Activated CD8-positive, alpha-beta T cell treated with anti-CD3 and anti-CD28 coated beads for 36 hours (primary cell): ENCODE measurements at regions of chr2 and their contacts with region 1.

Region 1: DNA sequence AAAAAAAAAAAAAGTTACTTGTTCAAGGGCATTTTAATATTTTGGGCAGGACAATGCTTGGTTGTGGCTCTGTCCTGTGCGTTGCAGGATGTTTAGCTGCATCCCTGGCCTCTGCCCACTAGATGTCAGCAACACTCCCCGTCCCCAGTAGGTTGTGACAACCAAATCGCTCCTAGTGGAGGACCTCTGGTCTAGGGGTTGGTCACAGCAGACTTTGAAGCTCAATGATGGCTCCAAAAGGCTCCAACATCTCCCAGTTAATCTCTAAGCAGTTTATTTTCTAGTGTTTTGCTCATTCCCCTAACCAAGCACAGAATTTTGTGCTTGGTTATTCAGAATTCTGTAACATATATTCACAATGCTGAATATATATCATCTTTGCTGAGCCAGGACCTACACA is 67.0 kb downstream of the CHRNA1 start:
- DNase-seq: peak; percentile 80
- ATAC-seq: peak; percentile 99
- H3K4me3 Mint-ChIP-seq: no peak overlapping the region
- H3K27ac Mint-ChIP-seq: no peak overlapping the region
- H3K4me1 Mint-ChIP-seq: no peaks in the 10 kb centered on the region
- H3K27me3 Mint-ChIP-seq: no peaks in the 10 kb centered on the region
- CTCF ChIP-seq: peak; percentile 90

Region 2: DNA sequence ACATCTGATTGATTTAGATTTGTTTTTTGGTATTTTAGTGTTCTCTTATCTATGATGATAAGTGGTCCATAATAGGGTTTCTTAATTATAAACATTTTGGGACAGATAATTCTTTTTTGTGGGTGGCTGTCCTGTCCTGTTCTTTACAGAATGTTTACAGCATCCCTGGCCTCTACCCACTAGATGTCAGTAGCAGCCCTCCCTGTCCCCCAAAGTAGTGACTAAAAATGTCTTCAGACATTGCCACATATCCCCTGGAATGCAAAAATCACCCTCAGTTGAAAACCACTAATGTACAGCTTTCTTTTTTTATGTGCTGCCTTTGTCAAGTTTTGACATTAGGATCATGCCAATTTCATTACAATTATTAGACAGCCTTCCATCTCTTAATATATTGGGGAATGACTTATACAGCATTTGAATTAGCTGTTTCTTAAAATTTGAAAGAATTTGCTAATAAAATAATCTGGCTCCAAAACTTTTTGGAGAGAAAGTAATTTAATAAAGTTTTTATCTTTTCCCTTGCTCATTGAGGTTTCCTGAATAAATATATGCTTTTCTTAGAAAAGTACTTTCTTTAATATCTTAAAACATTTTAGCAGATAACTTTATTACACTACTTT is 119.2 kb before region 1 on chr2:
- CTCF ChIA-PET with region 1: interaction called, 54 read pairs
- POLR2A ChIA-PET with region 1: interaction called, 4 read pairs
- intact Hi-C with region 1: no loop called
- DNase-seq: peak; percentile 71
- ATAC-seq: peak; percentile 71
- H3K4me3 Mint-ChIP-seq: no peak overlapping the region
- H3K27ac Mint-ChIP-seq: peak overlapping the region; percentile 49
- H3K4me1 Mint-ChIP-seq: peaks cover 75% of the 10 kb centered on the region
- H3K27me3 Mint-ChIP-seq: no peaks in the 10 kb centered on the region
- CTCF ChIP-seq: peak; percentile 63

Region 3: GRCh38 chr2:174708713-174709112 is 11.5 kb after region 1 on chr2:
- CTCF ChIA-PET with region 1: interaction called, 96 read pairs
- POLR2A ChIA-PET with region 1: no interaction called
- intact Hi-C with region 1: no loop called
- DNase-seq: no peak
- ATAC-seq: no peak
- H3K4me3 Mint-ChIP-seq: no peak overlapping the region
- H3K27ac Mint-ChIP-seq: no peak overlapping the region
- H3K4me1 Mint-ChIP-seq: no peaks in the 10 kb centered on the region
- H3K27me3 Mint-ChIP-seq: peaks cover 5% of the 10 kb centered on the region
- CTCF ChIP-seq: no peak

Region 4: DNA sequence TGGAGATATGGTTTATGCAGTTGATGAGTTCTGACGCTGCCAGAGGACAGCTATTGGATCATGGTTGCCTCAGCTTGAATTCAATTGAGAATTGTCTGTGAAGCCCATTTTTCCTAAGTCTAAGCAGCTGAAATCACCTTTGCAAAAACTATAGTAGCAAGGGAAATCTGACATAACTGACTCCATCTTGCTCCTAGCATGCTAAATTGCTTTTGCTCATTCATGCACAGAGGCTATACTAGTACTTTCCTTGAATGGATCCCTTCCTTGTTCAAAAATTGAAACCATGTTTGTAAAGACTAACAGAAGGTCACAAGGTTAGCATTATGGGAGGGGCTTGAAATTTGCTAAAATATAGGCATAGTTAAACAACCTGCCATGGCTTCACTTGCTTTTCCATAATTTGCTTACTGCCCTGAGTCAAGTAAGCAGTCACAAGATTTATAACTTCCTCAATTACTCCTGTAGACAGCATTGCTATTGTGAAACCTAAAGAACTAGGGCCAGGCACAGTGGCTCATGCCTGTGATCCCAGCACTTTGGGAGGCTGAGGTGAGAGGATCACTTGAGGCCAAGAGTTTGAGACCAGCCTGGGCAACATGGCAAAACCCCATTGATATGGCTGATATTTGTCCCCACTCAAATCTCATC is 25.8 kb after region 1 on chr2:
- CTCF ChIA-PET with region 1: interaction called, 96 read pairs
- POLR2A ChIA-PET with region 1: interaction called, 6 read pairs
- intact Hi-C with region 1: no loop called
- DNase-seq: no peak
- ATAC-seq: no peak
- H3K4me3 Mint-ChIP-seq: no peak overlapping the region
- H3K27ac Mint-ChIP-seq: no peak overlapping the region
- H3K4me1 Mint-ChIP-seq: peaks cover 19% of the 10 kb centered on the region
- H3K27me3 Mint-ChIP-seq: peaks cover 2% of the 10 kb centered on the region
- CTCF ChIP-seq: no peak

Region 5: GRCh38 chr2:174748948-174749347 is 51.7 kb after region 1 on chr2:
- CTCF ChIA-PET with region 1: interaction called, 132 read pairs
- POLR2A ChIA-PET with region 1: interaction called, 4 read pairs
- intact Hi-C with region 1: loop called (anchors 2 kb)
- DNase-seq: peak; percentile 78
- ATAC-seq: peak; percentile 59
- H3K4me3 Mint-ChIP-seq: no peak overlapping the region
- H3K27ac Mint-ChIP-seq: no peak overlapping the region
- H3K4me1 Mint-ChIP-seq: peaks cover 42% of the 10 kb centered on the region
- H3K27me3 Mint-ChIP-seq: no peaks in the 10 kb centered on the region
- CTCF ChIP-seq: peak; percentile 79

Region 6: DNA sequence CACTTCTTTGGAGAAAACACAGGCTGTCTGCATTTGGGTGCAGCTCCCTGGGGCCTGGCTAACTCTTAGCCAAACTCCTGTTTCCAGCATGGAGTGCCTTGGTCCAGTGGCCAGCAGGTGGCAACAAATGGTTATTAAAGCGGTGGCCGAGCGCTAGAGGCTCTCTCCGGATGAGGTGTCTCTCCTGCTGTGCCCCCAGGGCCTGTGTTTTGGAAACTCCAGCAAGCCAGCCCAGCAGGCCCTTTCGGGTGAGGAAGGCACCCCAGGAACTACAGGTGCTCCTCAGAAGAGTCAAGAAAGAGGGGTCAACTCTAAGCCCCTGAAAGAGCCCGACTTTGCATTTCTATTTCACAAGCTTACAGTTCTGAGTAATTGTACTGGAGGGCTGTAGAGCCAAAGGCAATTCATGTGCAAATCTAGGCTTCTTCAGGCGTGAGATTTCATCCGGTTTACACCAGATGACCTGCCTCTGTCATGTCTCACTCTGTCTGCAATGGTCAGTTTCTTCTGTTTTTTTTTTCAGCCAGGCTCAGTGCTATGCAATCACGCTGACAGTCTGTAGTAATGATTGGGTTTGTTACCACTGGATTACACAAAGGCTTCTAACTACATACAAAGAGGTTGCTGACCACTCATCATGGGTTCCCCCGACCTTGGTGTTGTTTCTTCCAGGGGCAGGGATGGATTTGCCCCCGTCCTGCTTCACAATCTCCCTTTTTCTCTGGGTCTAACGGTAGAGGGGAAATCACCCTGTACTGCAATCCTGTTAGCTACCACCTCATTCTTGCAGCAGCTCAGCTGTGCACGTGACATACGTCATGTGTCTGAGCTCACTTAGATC is 74.6 kb after region 1 on chr2:
- CTCF ChIA-PET with region 1: interaction called, 57 read pairs
- POLR2A ChIA-PET with region 1: no interaction called
- intact Hi-C with region 1: no loop called
- DNase-seq: peak; percentile 81
- ATAC-seq: peak; percentile 88
- H3K4me3 Mint-ChIP-seq: no peak overlapping the region
- H3K27ac Mint-ChIP-seq: no peak overlapping the region
- H3K4me1 Mint-ChIP-seq: peaks cover 16% of the 10 kb centered on the region
- H3K27me3 Mint-ChIP-seq: no peaks in the 10 kb centered on the region
- CTCF ChIP-seq: peak; percentile 65

Region 7: DNA sequence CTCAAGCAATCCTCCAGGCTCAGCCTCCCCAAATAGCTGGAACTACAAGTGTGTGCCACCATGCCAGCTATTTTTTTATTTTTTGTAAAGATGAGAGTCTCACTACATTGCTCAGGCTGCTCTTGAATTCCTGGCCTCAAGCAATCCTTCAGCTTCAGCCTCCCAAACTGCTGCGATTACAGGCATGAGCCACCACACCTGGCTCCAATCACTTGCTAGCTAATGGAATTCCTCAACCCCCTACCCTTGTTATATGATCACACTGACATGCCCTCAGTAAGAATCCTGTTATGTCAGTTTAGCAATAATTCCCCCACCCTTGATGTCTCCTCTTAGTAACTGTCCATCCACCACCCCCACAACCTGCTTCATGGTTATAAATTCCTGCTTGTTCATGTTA is 295.6 kb after region 1 on chr2:
- CTCF ChIA-PET with region 1: interaction called, 35 read pairs
- POLR2A ChIA-PET with region 1: interaction called, 6 read pairs
- intact Hi-C with region 1: loop called (anchors 5 kb)
- DNase-seq: no peak
- ATAC-seq: no peak
- H3K4me3 Mint-ChIP-seq: no peak overlapping the region
- H3K27ac Mint-ChIP-seq: no peak overlapping the region
- H3K4me1 Mint-ChIP-seq: peaks cover 6% of the 10 kb centered on the region
- H3K27me3 Mint-ChIP-seq: peaks cover 16% of the 10 kb centered on the region
- CTCF ChIP-seq: no peak